ENCODE measurements at regions of chr3 and their contacts with region 1.

Region 1: DNA sequence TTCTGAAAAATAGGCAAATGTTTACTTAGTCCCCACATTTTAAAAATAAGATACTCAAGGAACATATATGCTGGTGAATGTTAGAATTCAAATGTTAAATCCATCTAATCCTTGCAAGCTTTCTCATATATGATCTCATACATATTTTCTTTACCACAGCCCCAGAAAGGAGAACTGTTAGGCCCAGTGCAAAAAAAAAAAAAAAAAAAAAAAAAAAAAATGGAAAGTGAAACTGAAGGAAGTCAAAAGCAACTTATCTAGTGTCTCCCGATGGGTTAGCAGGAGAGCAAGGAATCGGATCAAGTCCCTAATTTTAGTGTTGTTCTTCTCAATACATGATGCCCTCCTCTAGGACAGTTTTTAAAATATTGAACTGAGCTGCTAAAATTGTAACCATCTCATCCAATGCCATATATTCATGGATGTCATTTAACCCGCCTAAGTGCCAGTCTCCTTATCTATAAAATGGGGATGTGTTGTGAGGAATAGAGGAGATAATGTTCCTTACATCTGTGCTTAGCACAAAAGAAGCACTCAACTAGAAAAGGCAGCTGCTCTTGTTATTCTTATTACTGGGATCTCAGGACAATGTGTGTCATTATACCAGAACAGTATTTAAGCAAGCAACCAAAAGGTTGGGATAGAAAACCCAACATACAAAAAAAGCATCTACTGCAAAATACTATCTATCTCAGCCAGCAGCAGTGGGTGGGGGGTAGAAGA is 279.7 kb downstream of the MAGI1 start:
- DNase-seq: peak; percentile 60
- ATAC-seq: peak; percentile 63
- H3K4me3 ChIP-seq: peak overlapping the region; percentile 28; the same call in 1 of the 2 replicates
- H3K27ac ChIP-seq: no peak overlapping the region
- H3K4me1 ChIP-seq: peaks cover 4% of the 10 kb centered on the region
- H3K27me3 ChIP-seq: no peaks in the 10 kb centered on the region
- CTCF ChIP-seq: no peak
- POLR2A ChIP-seq: no peak
- RAD21 ChIP-seq: no peak

Region 2: DNA sequence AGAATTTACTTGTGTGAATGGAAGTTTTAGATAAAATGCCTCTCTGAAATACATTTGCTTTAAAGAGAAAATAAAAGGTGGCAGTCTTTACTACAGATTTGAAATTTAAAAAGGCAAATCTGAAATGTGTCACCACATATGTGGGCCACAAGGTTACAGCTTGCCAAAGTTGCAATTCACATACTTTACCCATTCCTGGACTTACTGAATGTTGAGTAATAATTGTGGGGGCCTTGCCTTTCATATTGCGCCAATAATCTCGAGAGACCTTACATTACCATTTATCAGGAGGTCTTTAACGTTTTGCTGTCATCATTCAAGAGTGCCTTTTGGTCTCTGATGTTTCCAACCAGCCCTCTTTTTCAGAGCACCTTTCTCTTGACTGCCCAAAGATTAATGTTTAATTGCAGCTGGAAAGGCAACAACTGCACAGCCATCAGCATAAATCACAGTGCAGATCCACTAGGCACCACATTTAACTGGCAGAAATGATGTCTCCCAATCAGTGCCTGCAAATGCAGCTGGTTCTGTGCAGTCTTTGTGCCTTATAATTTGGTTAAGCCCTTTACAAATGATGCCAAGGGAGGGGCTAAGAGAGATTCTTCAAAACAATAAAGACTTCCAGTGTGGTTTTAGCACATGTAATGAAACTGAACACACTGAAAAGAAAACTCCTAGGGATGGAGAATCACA is 72.8 kb after region 1 on chr3:
- CTCF ChIA-PET with region 1: no interaction called
- POLR2A ChIA-PET with region 1: no interaction called
- dilution Hi-C with region 1: no loop called
- in situ Hi-C with region 1: no loop called
- intact Hi-C with region 1: no loop called
- DNase-seq: peak; percentile 40
- ATAC-seq: no peak
- H3K4me3 ChIP-seq: no peak overlapping the region
- H3K27ac ChIP-seq: no peak overlapping the region
- H3K4me1 ChIP-seq: peaks cover 13% of the 10 kb centered on the region; the same call in 1 of the 2 replicates
- H3K27me3 ChIP-seq: no peaks in the 10 kb centered on the region
- CTCF ChIP-seq: no peak
- POLR2A ChIP-seq: no peak
- RAD21 ChIP-seq: no peak

Region 3: DNA sequence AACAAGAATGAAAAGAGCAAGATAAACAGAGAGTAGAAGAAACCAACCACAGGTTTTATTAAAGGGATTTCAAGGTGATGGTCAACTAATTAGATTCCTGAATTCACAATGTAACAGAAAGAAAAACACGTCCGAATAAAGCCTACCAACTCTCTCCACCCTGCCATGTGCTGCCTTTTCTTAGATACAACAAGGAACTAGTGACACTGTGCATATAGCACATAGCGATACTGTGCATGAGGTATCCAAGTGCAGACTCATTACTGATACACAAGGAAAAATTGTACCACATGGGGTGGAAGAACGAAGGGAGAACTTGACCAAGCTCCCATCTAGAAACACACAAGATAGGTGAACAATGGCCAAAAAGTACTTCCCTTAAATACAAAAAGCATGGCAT is 125.0 kb after region 1 on chr3:
- CTCF ChIA-PET with region 1: no interaction called
- POLR2A ChIA-PET with region 1: interaction called, 23 read pairs
- dilution Hi-C with region 1: no loop called
- in situ Hi-C with region 1: no loop called
- intact Hi-C with region 1: no loop called
- DNase-seq: no peak
- ATAC-seq: peak; percentile 50; the same call in 1 of the 2 replicates
- H3K4me3 ChIP-seq: no peak overlapping the region
- H3K27ac ChIP-seq: no peak overlapping the region
- H3K4me1 ChIP-seq: peaks cover 7% of the 10 kb centered on the region; the same call in 1 of the 2 replicates
- H3K27me3 ChIP-seq: no peaks in the 10 kb centered on the region
- CTCF ChIP-seq: no peak
- POLR2A ChIP-seq: no peak
- RAD21 ChIP-seq: no peak